ENCODE measurements at regions of chr5 and their contacts with region 1.

Region 1: DNA sequence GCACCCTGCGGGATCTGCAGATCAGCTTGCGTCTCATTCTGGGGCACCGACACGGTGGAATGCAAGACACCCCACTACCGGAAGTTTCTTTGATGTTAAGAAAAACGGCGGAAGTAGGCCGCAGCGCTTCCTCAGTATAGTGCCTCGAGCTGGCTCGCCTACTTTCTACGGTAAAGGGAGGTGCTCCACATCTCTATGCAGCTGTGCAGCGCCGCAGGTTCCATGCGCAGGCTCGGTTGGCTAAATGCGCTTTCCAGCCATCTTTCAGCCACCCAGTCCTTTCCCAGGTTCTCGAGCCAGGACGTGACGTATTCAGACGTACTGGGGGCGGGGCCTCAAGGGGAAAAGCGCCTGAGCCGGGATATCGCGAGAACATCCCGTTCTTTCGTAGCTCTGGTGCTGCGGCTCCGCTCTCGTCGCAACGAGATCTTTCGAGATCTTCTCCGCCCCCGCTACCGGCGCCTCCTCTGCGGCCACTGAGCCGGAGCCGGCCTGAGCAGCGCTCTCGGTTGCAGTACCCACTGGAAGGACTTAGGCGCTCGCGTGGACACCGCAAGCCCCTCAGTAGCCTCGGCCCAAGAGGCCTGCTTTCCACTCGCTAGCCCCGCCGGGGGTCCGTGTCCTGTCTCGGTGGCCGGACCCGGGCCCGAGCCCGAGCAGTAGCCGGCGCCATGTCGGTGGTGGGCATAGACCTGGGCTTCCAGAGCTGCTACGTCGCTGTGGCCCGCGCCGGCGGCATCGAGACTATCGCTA is at the start of gene HSPA4:
- DNase-seq: peak; percentile 95 to 99 (median 98)
- H3K4me3 ChIP-seq: peak within 1 kb of the TSS; percentile 76
- H3K4me3 Mint-ChIP-seq: peak within 1 kb of the TSS; percentile 96 to 99 (median 98)
- H3K27ac ChIP-seq: peak within 1 kb of the TSS; percentile 98
- H3K27ac Mint-ChIP-seq: peak within 1 kb of the TSS; percentile 99 to 100 (median 100)
- H3K4me1 ChIP-seq: peaks cover 22% of the 10 kb centered on the region
- H3K4me1 Mint-ChIP-seq: peaks cover 43 to 68% (median 66%) of the 10 kb centered on the region in 3 donors
- H3K27me3 ChIP-seq: no peaks in the 10 kb centered on the region
- H3K27me3 Mint-ChIP-seq: no peaks in the 10 kb centered on the region
- total RNA-seq, gene HSPA4: 236 to 244 TPM

Region 2: GRCh38 chr5:132629230-132629944 is 422.4 kb before region 1 on chr5:
- CTCF ChIA-PET with region 1: no interaction called
- POLR2A ChIA-PET with region 1: no interaction called
- DNase-seq: no peak
- H3K4me3 ChIP-seq: no peak overlapping the region
- H3K4me3 Mint-ChIP-seq: peak overlapping the region in 2 of 7 donors; percentile 7 to 61
- H3K27ac ChIP-seq: no peak overlapping the region
- H3K27ac Mint-ChIP-seq: peak overlapping the region in 5 of 8 donors; percentile 44 to 85 (median 48)
- H3K4me1 ChIP-seq: no peaks in the 10 kb centered on the region
- H3K4me1 Mint-ChIP-seq: peaks cover 15 to 22% (median 19%) of the 10 kb centered on the region in 3 donors
- H3K27me3 ChIP-seq: no peaks in the 10 kb centered on the region
- H3K27me3 Mint-ChIP-seq: no peaks in the 10 kb centered on the region

Region 3: DNA sequence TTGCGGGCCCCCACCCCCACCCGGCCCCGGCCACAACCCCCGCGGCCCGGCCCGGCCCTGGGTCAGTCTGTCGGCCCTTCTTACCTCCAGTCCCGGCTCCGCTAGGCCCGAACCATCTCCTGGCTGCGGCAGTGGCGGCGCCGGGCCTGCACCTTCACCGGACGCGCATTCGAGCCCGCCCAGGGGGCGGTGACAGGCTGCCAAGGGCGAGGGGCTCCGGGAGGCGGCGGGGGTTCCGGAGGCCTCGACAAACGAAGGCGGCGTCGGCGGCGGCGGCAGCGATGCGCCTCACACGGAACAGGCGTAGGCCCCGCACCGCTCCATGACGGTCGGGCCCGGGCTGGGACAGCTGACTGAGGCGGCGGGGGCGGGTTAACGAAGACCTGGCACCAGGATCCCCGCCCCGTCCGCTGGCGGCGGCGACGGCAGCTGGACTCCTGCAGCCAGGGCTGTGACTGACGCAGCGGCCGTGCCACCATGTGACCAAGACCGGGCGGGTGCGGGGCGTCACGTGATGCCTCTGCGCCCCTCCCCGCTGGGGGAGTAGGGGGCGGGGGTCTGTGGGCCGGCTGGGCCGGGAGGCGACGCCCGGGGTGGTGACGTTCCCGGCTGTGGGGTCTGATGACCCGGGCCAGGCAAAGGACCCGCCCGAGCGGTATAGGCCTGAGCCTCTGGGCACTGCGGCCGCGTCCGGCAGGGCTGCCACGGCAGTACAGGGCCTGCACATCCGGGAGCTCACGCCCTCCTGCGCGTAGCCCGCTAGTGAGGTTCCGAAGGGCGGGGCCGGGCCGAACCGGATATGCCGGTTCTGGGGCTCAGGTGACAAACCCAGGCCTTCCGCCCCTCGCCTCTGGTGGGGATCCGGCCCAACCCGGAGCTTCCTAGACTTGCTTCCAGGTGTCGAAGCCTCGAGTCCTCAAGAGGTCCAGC is 88.3 kb before region 1 on chr5 and contains the start of gene AFF4:
- CTCF ChIA-PET with region 1: interaction called, 6 read pairs
- POLR2A ChIA-PET with region 1: interaction called, 50 read pairs
- DNase-seq: peak; percentile 79 to 92 (median 88)
- H3K4me3 ChIP-seq: peak within 1 kb of the TSS; percentile 85
- H3K4me3 Mint-ChIP-seq: peak within 1 kb of the TSS; percentile 93 to 98 (median 95)
- H3K27ac ChIP-seq: peak within 1 kb of the TSS; percentile 90
- H3K27ac Mint-ChIP-seq: peak within 1 kb of the TSS; percentile 97 to 100 (median 98)
- H3K4me1 ChIP-seq: peaks cover 42% of the 10 kb centered on the region
- H3K4me1 Mint-ChIP-seq: peaks cover 35 to 49% (median 48%) of the 10 kb centered on the region in 3 donors
- H3K27me3 ChIP-seq: no peaks in the 10 kb centered on the region
- H3K27me3 Mint-ChIP-seq: no peaks in the 10 kb centered on the region
- total RNA-seq, gene AFF4: 26.3 to 28.8 TPM

Region 4: GRCh38 chr5:132988124-132988408 is 63.7 kb before region 1 on chr5:
- CTCF ChIA-PET with region 1: no interaction called
- POLR2A ChIA-PET with region 1: no interaction called
- DNase-seq: no peak
- H3K4me3 ChIP-seq: no peak overlapping the region
- H3K4me3 Mint-ChIP-seq: no peak overlapping the region
- H3K27ac ChIP-seq: no peak overlapping the region
- H3K27ac Mint-ChIP-seq: peak overlapping the region in 1 of 8 donors; percentile 82
- H3K4me1 ChIP-seq: no peaks in the 10 kb centered on the region
- H3K4me1 Mint-ChIP-seq: no peaks in the 10 kb centered on the region
- H3K27me3 ChIP-seq: no peaks in the 10 kb centered on the region
- H3K27me3 Mint-ChIP-seq: peaks cover 0 to 3% of the 10 kb centered on the region in 2 donors

Region 5: DNA sequence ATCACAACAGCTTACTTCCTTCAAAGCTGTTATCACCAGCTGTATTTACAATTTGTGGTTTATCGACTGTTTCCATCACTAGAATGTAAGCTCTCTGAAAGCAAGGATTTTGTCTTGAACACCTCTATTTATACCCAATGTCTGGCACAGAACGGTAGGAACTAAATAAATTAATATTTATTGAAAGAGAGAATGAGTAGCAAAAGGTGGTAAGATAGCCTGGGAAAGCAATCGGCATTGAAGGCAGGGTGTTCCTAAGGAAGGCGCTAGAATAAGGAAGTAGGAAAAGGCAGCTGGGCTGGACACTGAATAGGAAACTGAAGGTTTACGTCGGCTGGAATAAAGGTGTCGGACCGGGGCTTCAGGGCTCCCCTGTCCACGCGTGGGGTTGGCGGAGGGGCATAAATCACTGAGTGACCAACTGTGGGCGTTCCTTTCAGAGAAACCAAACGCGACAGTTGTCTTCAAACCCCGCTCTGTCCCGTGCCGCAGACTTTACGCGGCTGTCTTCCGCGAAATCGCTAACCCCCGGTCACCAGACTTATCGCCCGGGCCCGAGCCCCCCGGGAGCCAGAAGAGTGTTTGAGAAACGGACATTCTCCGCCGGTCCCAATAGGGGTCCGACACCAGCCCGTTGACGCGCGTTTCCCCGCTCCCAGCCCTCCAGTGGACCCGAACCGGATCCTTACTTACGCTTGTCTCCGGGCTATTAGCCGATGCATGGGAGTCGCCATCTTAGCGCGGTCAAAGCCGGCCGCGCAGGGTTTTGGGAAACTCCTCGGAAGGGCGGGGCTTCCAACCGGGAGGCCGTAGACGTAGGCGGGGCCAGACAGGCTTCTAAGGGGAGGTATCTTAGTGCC is 25.7 kb before region 1 on chr5 and contains the start of gene ZCCHC10:
- CTCF ChIA-PET with region 1: no interaction called
- POLR2A ChIA-PET with region 1: interaction called, 15 read pairs
- DNase-seq: peak; percentile 84 to 93 (median 88)
- H3K4me3 ChIP-seq: peak within 1 kb of the TSS; percentile 80
- H3K4me3 Mint-ChIP-seq: peak within 1 kb of the TSS; percentile 94 to 99 (median 96)
- H3K27ac ChIP-seq: peak within 1 kb of the TSS; percentile 85
- H3K27ac Mint-ChIP-seq: peak within 1 kb of the TSS; percentile 95 to 100 (median 96)
- H3K4me1 ChIP-seq: peaks cover 14% of the 10 kb centered on the region
- H3K4me1 Mint-ChIP-seq: peaks cover 21 to 39% (median 34%) of the 10 kb centered on the region in 3 donors
- H3K27me3 ChIP-seq: no peaks in the 10 kb centered on the region
- H3K27me3 Mint-ChIP-seq: peaks cover 0 to 3% of the 10 kb centered on the region in 2 donors
- total RNA-seq, gene ZCCHC10: 31.8 to 35.0 TPM